Caco-2 (cell line): ENCODE measurements at regions of chrX and their contacts with region 1.

Region 1: GRCh38 chrX:63922221-63922620 is 137.2 kb upstream of the ARHGEF9 start:
- DNase-seq: peak; percentile 36
- H3K4me3 ChIP-seq: no peak overlapping the region
- H3K4me3 Mint-ChIP-seq: no peak overlapping the region
- H3K27ac Mint-ChIP-seq: peak overlapping the region; percentile 75
- H3K4me1 ChIP-seq: peaks cover 25% of the 10 kb centered on the region
- H3K4me1 Mint-ChIP-seq: peaks cover 11% of the 10 kb centered on the region
- H3K27me3 ChIP-seq: no peaks in the 10 kb centered on the region
- H3K27me3 Mint-ChIP-seq: no peaks in the 10 kb centered on the region
- CTCF ChIP-seq: no peak

Region 2: DNA sequence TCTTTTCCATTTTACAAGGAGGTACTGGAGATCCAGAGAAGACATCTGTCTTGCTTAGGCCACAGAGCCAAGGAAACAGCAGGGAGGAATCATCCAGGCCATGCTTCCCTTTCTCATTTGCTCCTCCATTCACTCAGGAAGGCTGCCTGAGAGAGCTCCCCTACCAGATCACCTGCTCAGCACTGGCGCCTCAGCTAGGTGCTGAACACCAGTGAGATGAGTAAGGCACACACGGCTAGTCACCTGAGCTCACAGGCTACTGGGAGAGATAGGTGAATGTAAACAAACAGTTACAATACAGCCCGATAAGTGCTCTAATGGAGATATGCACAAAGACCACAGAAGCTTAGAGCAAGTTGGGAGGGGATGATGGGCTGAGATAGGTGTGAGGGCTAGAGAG is 12.6 kb after region 1 on chrX:
- CTCF ChIA-PET with region 1: no interaction called
- POLR2A ChIA-PET with region 1: no interaction called
- intact Hi-C with region 1: no loop called
- DNase-seq: no peak
- H3K4me3 ChIP-seq: no peak overlapping the region
- H3K4me3 Mint-ChIP-seq: no peak overlapping the region
- H3K27ac Mint-ChIP-seq: no peak overlapping the region
- H3K4me1 ChIP-seq: no peaks in the 10 kb centered on the region
- H3K4me1 Mint-ChIP-seq: no peaks in the 10 kb centered on the region
- H3K27me3 ChIP-seq: no peaks in the 10 kb centered on the region
- H3K27me3 Mint-ChIP-seq: peaks cover 3% of the 10 kb centered on the region
- CTCF ChIP-seq: no peak

Region 3: GRCh38 chrX:64186974-64187761 is 264.9 kb after region 1 on chrX:
- CTCF ChIA-PET with region 1: no interaction called
- POLR2A ChIA-PET with region 1: no interaction called
- intact Hi-C with region 1: loop called (anchors 2 kb)
- DNase-seq: no peak
- H3K4me3 ChIP-seq: no peak overlapping the region
- H3K4me3 Mint-ChIP-seq: no peak overlapping the region
- H3K27ac Mint-ChIP-seq: no peak overlapping the region
- H3K4me1 ChIP-seq: peaks cover 7% of the 10 kb centered on the region
- H3K4me1 Mint-ChIP-seq: no peaks in the 10 kb centered on the region
- H3K27me3 ChIP-seq: no peaks in the 10 kb centered on the region
- H3K27me3 Mint-ChIP-seq: no peaks in the 10 kb centered on the region
- CTCF ChIP-seq: no peak